ENCODE measurements at regions of chr1 and their contacts with region 1.

Region 1: DNA sequence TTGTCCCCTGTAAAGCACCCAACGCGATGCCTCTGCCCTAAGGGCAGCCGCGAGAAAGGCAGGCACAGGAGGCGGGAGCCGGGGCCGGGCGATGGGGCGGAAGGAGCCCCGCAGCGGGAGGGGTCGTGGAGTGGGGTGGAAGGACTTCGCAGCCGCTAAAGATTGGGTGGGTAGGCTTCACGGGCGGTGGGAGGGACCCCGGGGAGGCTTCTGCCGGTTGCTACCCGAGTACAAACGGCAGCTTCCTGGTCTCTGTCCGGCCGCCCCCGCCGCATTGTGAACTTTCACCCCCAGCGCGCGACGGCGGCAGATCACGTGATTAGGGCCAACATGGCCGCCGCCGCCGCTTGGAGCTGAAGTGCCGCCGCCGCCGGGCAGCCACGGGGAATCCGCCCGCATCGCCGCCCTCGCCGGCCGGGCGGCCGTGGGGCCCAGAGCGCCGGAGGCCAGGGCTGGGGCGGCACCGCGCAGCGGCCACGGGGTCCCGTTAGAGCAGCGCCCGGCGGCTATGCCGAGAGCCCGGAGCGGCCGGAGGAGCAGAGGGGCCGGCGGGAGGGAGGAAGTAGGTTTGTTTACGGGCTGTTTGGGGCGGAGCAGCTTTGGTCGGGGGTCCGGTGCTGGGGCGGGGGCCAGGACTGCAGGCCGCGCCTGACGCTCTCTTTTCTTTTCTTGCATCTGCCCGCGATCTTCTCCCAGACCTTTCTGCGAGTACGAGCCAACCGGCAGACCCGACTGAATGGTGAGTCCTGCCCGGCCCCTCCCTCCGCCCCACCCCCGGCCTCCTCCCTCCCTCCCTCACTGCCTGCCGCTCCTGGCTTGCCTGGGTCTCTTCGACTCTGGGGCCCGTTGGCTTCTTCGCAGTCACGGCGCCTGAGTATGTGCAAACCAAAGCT is 42.4 kb downstream of the TMEM53 start:
- DNase-seq: peak; percentile 97
- H3K4me3 ChIP-seq: peak overlapping the region; percentile 74 to 77
- H3K27ac ChIP-seq: peak overlapping the region; percentile 83 to 89
- H3K4me1 ChIP-seq: peaks cover 4 to 44% of the 10 kb centered on the region in 2 experiments; a peak in 1 of 4 replicates
- H3K27me3 ChIP-seq: no peaks in the 10 kb centered on the region
- CTCF ChIP-seq: no peak
- EP300 ChIP-seq: no peak; a peak in 1 of 4 replicates
- RAD21 ChIP-seq: no peak

Region 2: DNA sequence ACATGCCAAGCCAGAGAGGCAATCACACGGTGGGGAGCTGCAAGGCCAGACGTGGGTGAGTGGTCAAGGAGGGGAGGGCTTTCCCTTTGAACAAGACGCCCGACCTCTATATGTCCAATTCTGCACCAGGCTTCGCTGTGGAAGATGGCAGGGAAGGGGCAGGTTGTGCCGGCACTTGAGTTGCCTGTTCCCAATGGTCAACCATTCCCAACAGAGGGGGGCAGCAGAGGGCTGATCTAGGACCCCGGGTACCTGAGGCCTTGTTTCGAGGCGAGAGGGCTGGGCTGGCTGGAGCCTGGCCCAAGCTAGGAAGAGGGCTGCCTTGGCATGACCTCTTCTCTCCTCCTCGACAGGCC is 22.5 kb before region 1 on chr1:
- CTCF ChIA-PET with region 1: interaction called, 15 read pairs
- POLR2A ChIA-PET with region 1: interaction called, 3 read pairs
- DNase-seq: peak; percentile 76
- H3K4me3 ChIP-seq: no peak overlapping the region
- H3K27ac ChIP-seq: no peak overlapping the region
- H3K4me1 ChIP-seq: peaks cover 0 to 3% of the 10 kb centered on the region in 2 experiments; a peak in 2 of 4 replicates
- H3K27me3 ChIP-seq: no peaks in the 10 kb centered on the region
- CTCF ChIP-seq: peak; percentile 59
- EP300 ChIP-seq: no peak
- RAD21 ChIP-seq: peak; percentile 78

Region 3: DNA sequence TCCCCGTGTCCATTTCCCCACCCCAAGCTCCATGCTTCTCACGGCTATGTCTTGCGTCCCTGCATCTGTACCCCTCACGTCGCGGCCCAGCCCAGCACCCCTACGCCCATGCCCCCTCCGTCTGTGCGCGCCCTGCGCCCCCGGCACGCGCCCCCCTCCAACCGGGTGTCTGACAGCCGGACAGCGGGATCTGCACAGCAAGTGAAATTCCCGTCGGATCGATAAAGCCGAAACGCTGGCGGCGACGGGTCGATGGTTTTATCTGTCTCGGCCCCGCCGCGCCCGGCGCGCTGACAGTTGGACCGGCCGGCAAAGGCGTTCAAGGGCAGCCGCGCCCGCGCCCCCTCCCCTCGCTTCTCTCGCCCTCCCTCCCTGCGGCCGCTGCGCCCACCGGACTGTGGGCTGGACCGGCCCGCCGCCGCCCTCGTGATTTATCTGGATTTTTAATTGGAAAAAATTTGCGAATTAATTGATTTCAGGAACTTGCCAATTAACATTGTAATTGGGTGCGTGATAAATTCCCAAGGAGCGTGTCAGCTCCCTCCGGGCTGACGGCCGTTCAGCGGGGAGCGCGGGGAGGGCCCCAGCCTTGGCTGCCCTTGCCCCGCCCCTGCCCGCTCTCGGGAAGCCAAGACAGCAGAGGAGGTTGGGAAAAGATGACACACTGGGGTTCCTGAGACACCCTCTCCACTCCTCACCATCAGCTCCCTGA is 14.7 kb before region 1 on chr1:
- CTCF ChIA-PET with region 1: interaction called, 6 read pairs
- POLR2A ChIA-PET with region 1: interaction called, 18 read pairs
- DNase-seq: peak; percentile 71
- H3K4me3 ChIP-seq: peak overlapping the region; percentile 50 to 62
- H3K27ac ChIP-seq: peak overlapping the region in 1 of 2 experiments; percentile 76; a peak in 2 of 4 replicates
- H3K4me1 ChIP-seq: peaks cover 12 to 15% of the 10 kb centered on the region in 2 experiments; a peak in 3 of 4 replicates
- H3K27me3 ChIP-seq: no peaks in the 10 kb centered on the region
- CTCF ChIP-seq: no peak
- EP300 ChIP-seq: no peak
- RAD21 ChIP-seq: no peak

Region 4: GRCh38 chr1:44645476-44646244 is 13.8 kb after region 1 on chr1:
- CTCF ChIA-PET with region 1: interaction called, 163 read pairs
- POLR2A ChIA-PET with region 1: interaction called, 50 read pairs
- DNase-seq: no peak
- H3K4me3 ChIP-seq: no peak overlapping the region
- H3K27ac ChIP-seq: no peak overlapping the region
- H3K4me1 ChIP-seq: peaks cover 0 to 49% of the 10 kb centered on the region in 2 experiments; a peak in 1 of 4 replicates
- H3K27me3 ChIP-seq: no peaks in the 10 kb centered on the region
- CTCF ChIP-seq: no peak
- EP300 ChIP-seq: no peak
- RAD21 ChIP-seq: no peak

Measured in SK-N-SH (cell line).